CD4-positive, alpha-beta memory T cell (primary cell): ENCODE measurements at regions of chr1 and their contacts with region 1.

Region 1: GRCh38 chr1:37859507-37860345 is at the start of gene MTF1:
- DNase-seq: peak; percentile 96 to 98 (median 97)
- H3K4me3 ChIP-seq: peak within 1 kb of the TSS; percentile 80 to 86
- H3K4me3 Mint-ChIP-seq: peak within 1 kb of the TSS; percentile 94 to 100 (median 96)
- H3K27ac ChIP-seq: peak within 1 kb of the TSS; percentile 96
- H3K27ac Mint-ChIP-seq: peak within 1 kb of the TSS; percentile 80 to 98 (median 97)
- H3K4me1 ChIP-seq: peaks cover 39% of the 10 kb centered on the region
- H3K4me1 Mint-ChIP-seq: peaks cover 19 to 39% (median 24%) of the 10 kb centered on the region in 4 donors
- H3K27me3 ChIP-seq: no peaks in the 10 kb centered on the region
- H3K27me3 Mint-ChIP-seq: no peaks in the 10 kb centered on the region
- total RNA-seq, gene MTF1: 30.1 to 32.5 TPM

Region 2: DNA sequence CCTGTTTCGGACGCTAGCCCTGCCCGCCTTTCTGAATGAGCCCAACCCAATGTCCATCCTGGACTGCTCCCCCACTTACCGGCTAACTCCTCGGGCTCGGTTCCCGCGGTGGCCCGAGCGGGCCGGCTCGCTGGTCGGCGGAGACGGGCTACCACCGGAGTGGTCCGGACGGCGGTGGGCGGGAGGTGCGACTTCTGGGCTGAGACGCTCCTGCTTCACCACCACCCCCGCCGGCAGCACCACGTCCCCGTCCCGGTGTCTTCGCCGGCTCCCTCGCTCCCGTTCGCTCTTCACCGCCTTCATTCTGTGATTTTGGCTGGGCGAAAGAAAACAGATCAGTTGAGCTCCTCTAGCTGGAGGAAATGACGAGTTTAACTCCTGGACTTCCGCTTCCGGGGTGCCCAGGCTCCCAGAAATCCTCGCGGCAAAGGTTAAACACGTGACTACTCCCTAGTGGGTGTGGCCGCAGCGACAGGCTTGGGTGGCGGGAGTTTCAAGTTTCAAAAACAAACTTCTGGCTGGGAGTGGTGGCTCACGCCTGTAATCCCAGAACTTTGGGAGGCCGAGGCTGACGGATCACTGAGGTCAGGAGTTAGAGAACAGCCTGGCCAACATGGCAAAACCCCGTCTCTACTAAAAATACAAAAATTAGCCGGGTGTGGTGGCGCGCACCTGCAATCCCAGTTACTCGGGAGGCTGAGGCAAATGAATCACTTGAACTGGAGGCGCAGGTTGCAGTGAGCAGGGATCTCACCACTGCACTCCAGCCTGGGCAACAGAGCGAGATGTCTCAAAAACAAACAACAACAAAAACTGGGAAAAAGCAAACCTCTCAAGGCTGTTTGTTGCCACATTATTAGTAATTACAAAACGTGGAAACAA is 305.6 kb before region 1 on chr1 and contains the start of gene SNIP1:
- CTCF ChIA-PET with region 1: no interaction called
- POLR2A ChIA-PET with region 1: no interaction called
- intact Hi-C with region 1: loop called (anchors 2 kb)
- DNase-seq: peak; percentile 90 to 96 (median 92)
- H3K4me3 ChIP-seq: peak within 1 kb of the TSS; percentile 96 to 99
- H3K4me3 Mint-ChIP-seq: peak within 1 kb of the TSS; percentile 95 to 100 (median 98)
- H3K27ac ChIP-seq: peak within 1 kb of the TSS; percentile 96
- H3K27ac Mint-ChIP-seq: peak within 1 kb of the TSS; percentile 81 to 100 (median 98)
- H3K4me1 ChIP-seq: peaks cover 30% of the 10 kb centered on the region
- H3K4me1 Mint-ChIP-seq: peaks cover 26 to 49% (median 36%) of the 10 kb centered on the region in 4 donors
- H3K27me3 ChIP-seq: no peaks in the 10 kb centered on the region
- H3K27me3 Mint-ChIP-seq: no peaks in the 10 kb centered on the region
- total RNA-seq, gene SNIP1: 29.8 to 30.2 TPM

Region 3: GRCh38 chr1:37807555-37808368 is 52.0 kb before region 1 on chr1 and contains the starts of genes C1orf122 and YRDC:
- CTCF ChIA-PET with region 1: interaction called, 20 read pairs
- POLR2A ChIA-PET with region 1: interaction called, 34 read pairs
- intact Hi-C with region 1: loop called (anchors 1 kb)
- DNase-seq: peak; percentile 86 to 93 (median 88)
- H3K4me3 ChIP-seq: peak within 1 kb of the TSS; percentile 56 to 83
- H3K4me3 Mint-ChIP-seq: peak within 1 kb of the TSS; percentile 92 to 98 (median 96)
- H3K27ac ChIP-seq: peak within 1 kb of the TSS; percentile 89
- H3K27ac Mint-ChIP-seq: peak within 1 kb of the TSS; percentile 93 to 99 (median 98)
- H3K4me1 ChIP-seq: peaks cover 40% of the 10 kb centered on the region
- H3K4me1 Mint-ChIP-seq: peaks cover 13 to 57% (median 32%) of the 10 kb centered on the region in 4 donors
- H3K27me3 ChIP-seq: no peaks in the 10 kb centered on the region
- H3K27me3 Mint-ChIP-seq: no peaks in the 10 kb centered on the region
- total RNA-seq, gene C1orf122: 12.4 to 13.9 TPM
- total RNA-seq, gene YRDC: 13.8 to 14.1 TPM

Region 4: GRCh38 chr1:37840711-37841110 is 19.0 kb before region 1 on chr1:
- CTCF ChIA-PET with region 1: interaction called, 13 read pairs
- POLR2A ChIA-PET with region 1: interaction called, 3 read pairs
- intact Hi-C with region 1: no loop called
- DNase-seq: no peak
- H3K4me3 ChIP-seq: no peak overlapping the region
- H3K4me3 Mint-ChIP-seq: no peak overlapping the region
- H3K27ac ChIP-seq: no peak overlapping the region
- H3K27ac Mint-ChIP-seq: peak overlapping the region in 1 of 7 donors; percentile 29
- H3K4me1 ChIP-seq: peaks cover 3% of the 10 kb centered on the region
- H3K4me1 Mint-ChIP-seq: peaks cover 11 to 28% (median 16%) of the 10 kb centered on the region in 4 donors
- H3K27me3 ChIP-seq: no peaks in the 10 kb centered on the region
- H3K27me3 Mint-ChIP-seq: no peaks in the 10 kb centered on the region

Region 5: GRCh38 chr1:37875834-37876233 is 16.1 kb after region 1 on chr1:
- CTCF ChIA-PET with region 1: interaction called, 31 read pairs
- POLR2A ChIA-PET with region 1: no interaction called
- intact Hi-C with region 1: no loop called
- DNase-seq: no peak
- H3K4me3 ChIP-seq: no peak overlapping the region
- H3K4me3 Mint-ChIP-seq: no peak overlapping the region
- H3K27ac ChIP-seq: no peak overlapping the region
- H3K27ac Mint-ChIP-seq: no peak overlapping the region
- H3K4me1 ChIP-seq: no peaks in the 10 kb centered on the region
- H3K4me1 Mint-ChIP-seq: no peaks in the 10 kb centered on the region
- H3K27me3 ChIP-seq: no peaks in the 10 kb centered on the region
- H3K27me3 Mint-ChIP-seq: no peaks in the 10 kb centered on the region

Region 6: GRCh38 chr1:38012363-38013226 is 152.9 kb after region 1 on chr1 and contains the start of gene UTP11:
- CTCF ChIA-PET with region 1: interaction called, 3 read pairs
- POLR2A ChIA-PET with region 1: no interaction called
- intact Hi-C with region 1: loop called (anchors 1 kb)
- DNase-seq: peak; percentile 91 to 96 (median 93)
- H3K4me3 ChIP-seq: peak within 1 kb of the TSS; percentile 72 to 94
- H3K4me3 Mint-ChIP-seq: peak within 1 kb of the TSS; percentile 91 to 100 (median 98)
- H3K27ac ChIP-seq: peak within 1 kb of the TSS; percentile 87
- H3K27ac Mint-ChIP-seq: peak within 1 kb of the TSS; percentile 92 to 100 (median 99)
- H3K4me1 ChIP-seq: peaks cover 29% of the 10 kb centered on the region
- H3K4me1 Mint-ChIP-seq: peaks cover 19 to 46% (median 34%) of the 10 kb centered on the region in 4 donors
- H3K27me3 ChIP-seq: no peaks in the 10 kb centered on the region
- H3K27me3 Mint-ChIP-seq: no peaks in the 10 kb centered on the region
- total RNA-seq, gene UTP11: 17.3 to 17.5 TPM